Panc1 (cell line): ENCODE measurements at regions of chr6 and their contacts with region 1.

Region 1: GRCh38 chr6:156146891-156147290 is 630.3 kb upstream of the ARID1B start:
- DNase-seq: no peak
- ATAC-seq: no peak
- H3K4me3 ChIP-seq: no peak overlapping the region
- H3K27ac ChIP-seq: no peak overlapping the region
- H3K4me1 ChIP-seq: no peaks in the 10 kb centered on the region
- H3K27me3 ChIP-seq: no peaks in the 10 kb centered on the region
- CTCF ChIP-seq: no peak

Region 2: GRCh38 chr6:155706341-155706740 is 440.6 kb before region 1 on chr6:
- CTCF ChIA-PET with region 1: no interaction called
- POLR2A ChIA-PET with region 1: interaction called, 16 read pairs
- in situ Hi-C with region 1: no loop called
- intact Hi-C with region 1: no loop called
- DNase-seq: no peak
- ATAC-seq: no peak
- H3K4me3 ChIP-seq: no peak overlapping the region
- H3K27ac ChIP-seq: no peak overlapping the region
- H3K4me1 ChIP-seq: no peaks in the 10 kb centered on the region
- H3K27me3 ChIP-seq: no peaks in the 10 kb centered on the region
- CTCF ChIP-seq: no peak